SK-N-SH (cell line): ENCODE measurements at regions of chr11 and their contacts with region 1.

Region 1: DNA sequence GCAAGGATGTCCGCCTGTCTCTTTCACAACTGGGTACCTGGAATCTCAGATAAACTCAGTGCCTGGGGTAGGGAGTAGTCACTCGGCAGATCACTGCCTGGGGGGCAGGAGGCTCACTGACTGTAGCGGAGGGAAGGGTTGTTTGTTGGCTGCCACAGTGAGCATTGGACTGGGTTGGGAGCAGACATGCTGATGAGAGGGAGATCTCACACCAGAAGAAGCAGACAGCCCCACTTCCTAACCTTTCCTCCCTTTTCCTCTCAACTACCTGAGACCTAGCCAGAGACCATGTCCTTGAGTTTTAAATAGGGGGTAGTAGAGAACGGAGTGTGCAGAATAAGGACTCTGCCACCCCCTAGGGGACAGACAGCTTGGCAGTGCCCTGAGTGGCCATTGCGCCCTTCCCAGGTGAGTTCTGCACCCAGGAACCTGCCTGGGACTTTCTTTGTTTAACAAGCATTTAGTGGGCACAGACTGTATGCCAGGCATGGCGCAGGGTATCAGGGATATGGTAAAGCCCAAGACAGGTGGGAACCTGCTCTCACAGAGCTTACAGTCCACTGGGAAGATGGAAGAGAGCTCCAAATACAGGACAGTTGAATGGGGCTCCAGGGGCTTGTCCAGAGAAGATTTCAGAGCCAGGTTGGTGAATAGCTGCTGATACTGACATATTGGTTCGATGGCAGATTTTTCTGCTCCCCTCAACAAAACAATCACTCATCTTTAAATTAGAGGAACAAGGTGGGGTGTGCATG is 115.7 kb upstream of the NNMT start:
- DNase-seq: peak; percentile 61
- H3K4me3 ChIP-seq: no peak overlapping the region
- H3K27ac ChIP-seq: no peak overlapping the region
- H3K4me1 ChIP-seq: no peaks in the 10 kb centered on the region
- H3K27me3 ChIP-seq: peaks cover 6% of the 10 kb centered on the region; the same call in 1 of the 2 replicates
- CTCF ChIP-seq: peak; percentile 43
- EP300 ChIP-seq: no peak
- RAD21 ChIP-seq: peak; percentile 73

Region 2: GRCh38 chr11:114166897-114167323 is 13.6 kb before region 1 on chr11:
- CTCF ChIA-PET with region 1: interaction called, 20 read pairs
- POLR2A ChIA-PET with region 1: interaction called, 4 read pairs
- DNase-seq: no peak
- H3K4me3 ChIP-seq: no peak overlapping the region
- H3K27ac ChIP-seq: no peak overlapping the region
- H3K4me1 ChIP-seq: peaks cover 24 to 30% of the 10 kb centered on the region in 2 experiments
- H3K27me3 ChIP-seq: peaks cover 62% of the 10 kb centered on the region
- CTCF ChIP-seq: no peak
- EP300 ChIP-seq: peak in 1 of 2 experiments; percentile 27; a peak in 1 of 4 replicates
- RAD21 ChIP-seq: no peak

Region 3: GRCh38 chr11:114192841-114193389 is 12.4 kb after region 1 on chr11:
- CTCF ChIA-PET with region 1: interaction called, 17 read pairs
- POLR2A ChIA-PET with region 1: no interaction called
- DNase-seq: no peak
- H3K4me3 ChIP-seq: no peak overlapping the region
- H3K27ac ChIP-seq: no peak overlapping the region
- H3K4me1 ChIP-seq: no peaks in the 10 kb centered on the region; a peak in 1 of 4 replicates
- H3K27me3 ChIP-seq: no peaks in the 10 kb centered on the region
- CTCF ChIP-seq: no peak
- EP300 ChIP-seq: no peak
- RAD21 ChIP-seq: no peak

Region 4: DNA sequence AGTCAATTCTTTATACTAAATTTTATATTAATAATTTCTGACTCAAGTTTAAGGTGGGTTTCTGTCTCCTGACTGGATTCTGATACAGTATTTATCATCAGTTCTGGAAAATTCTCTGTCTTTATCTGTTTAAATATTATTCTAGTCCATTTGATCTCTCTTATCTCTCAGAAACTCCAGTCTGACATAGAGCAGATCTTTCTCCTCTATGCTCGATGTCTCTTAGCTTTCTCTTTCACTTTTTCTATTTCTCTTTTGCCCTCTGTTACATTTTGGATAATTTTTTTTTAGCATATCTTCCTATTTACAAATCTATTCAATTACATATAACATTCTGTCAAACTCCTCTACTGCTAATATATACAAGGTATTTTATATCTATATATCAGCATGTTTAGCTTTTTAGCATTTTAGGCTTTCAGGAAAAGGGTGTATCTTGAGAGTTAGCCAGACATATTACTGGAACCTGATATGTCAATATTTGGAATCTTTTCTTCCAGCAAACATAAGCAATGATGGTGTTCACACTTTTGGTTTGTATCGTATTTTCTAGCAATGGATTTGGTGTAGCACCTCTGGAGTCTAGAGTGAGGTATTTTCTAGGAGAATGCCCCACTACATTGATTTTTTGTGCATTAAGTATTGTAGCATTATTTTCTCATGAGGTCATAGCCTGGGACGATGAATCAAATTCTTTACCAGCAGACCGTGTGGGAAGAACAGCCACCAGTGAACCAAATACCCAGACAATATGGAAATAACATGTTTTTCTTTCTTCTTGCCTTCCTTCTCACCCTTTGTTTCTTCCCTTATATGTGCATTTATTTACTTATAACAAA is 111.6 kb after region 1 on chr11:
- CTCF ChIA-PET with region 1: no interaction called
- POLR2A ChIA-PET with region 1: no interaction called
- DNase-seq: no peak
- H3K4me3 ChIP-seq: peak overlapping the region in 1 of 2 experiments; percentile 52; a peak in 2 of 4 replicates
- H3K27ac ChIP-seq: peak overlapping the region; percentile 82 to 100; a peak in 3 of 4 replicates
- H3K4me1 ChIP-seq: peaks cover 2 to 9% of the 10 kb centered on the region in 2 experiments; a peak in 3 of 4 replicates
- H3K27me3 ChIP-seq: no peaks in the 10 kb centered on the region
- CTCF ChIP-seq: no peak; the same call in 1 of the 2 replicates
- EP300 ChIP-seq: peak in 1 of 2 experiments; percentile 49; a peak in 1 of 4 replicates
- RAD21 ChIP-seq: no peak